ENCODE measurements at regions of chr10 and their contacts with region 1.

Region 1: DNA sequence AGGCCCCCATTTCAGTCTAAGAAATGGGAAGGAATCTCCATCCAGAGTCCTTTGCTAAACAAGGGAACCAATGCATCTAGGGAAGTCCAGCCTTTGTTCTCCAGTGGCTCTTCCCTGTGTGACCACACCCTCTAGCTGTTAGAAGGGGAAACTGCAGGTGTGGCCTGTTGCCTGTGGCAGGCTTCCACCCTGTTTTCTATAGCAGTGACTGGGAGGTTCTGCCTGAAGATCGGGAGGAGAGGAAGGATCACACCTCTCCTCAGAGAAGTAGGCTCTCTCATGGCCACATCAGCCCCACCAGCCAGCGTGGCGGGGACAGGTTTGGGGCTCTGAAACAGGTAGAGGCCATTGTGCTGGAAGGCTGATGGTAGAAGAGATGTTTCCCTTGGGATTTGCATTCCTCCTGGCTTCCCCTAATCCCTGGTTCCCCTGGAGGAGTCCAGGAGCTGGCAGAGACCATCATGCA is 47.7 kb upstream of the TRIM8 start:
- DNase-seq: peak; percentile 54 to 57 (median 55)
- H3K4me3 ChIP-seq: no peak overlapping the region
- H3K27ac ChIP-seq: peak overlapping the region; percentile 14 to 91
- H3K4me1 ChIP-seq: peaks cover 8 to 72% (median 68%) of the 10 kb centered on the region in 4 experiments
- H3K27me3 ChIP-seq: no peaks in the 10 kb centered on the region

Region 2: GRCh38 chr10:102509387-102509786 is 87.2 kb before region 1 on chr10:
- CTCF ChIA-PET with region 1: interaction called, 23 read pairs
- POLR2A ChIA-PET with region 1: no interaction called
- DNase-seq: peak; percentile 25 to 64 (median 56)
- H3K4me3 ChIP-seq: no peak overlapping the region
- H3K27ac ChIP-seq: no peak overlapping the region
- H3K4me1 ChIP-seq: peaks cover 9 to 43% (median 27%) of the 10 kb centered on the region in 4 experiments
- H3K27me3 ChIP-seq: no peaks in the 10 kb centered on the region

Region 3: GRCh38 chr10:102583435-102584417 is 12.8 kb before region 1 on chr10:
- CTCF ChIA-PET with region 1: interaction called, 43 read pairs
- POLR2A ChIA-PET with region 1: no interaction called
- DNase-seq: peak; percentile 87 to 94 (median 90)
- H3K4me3 ChIP-seq: no peak overlapping the region
- H3K27ac ChIP-seq: peak overlapping the region in 1 of 2 experiments; percentile 11
- H3K4me1 ChIP-seq: peaks cover 3 to 20% (median 14%) of the 10 kb centered on the region in 4 experiments
- H3K27me3 ChIP-seq: no peaks in the 10 kb centered on the region

Region 4: DNA sequence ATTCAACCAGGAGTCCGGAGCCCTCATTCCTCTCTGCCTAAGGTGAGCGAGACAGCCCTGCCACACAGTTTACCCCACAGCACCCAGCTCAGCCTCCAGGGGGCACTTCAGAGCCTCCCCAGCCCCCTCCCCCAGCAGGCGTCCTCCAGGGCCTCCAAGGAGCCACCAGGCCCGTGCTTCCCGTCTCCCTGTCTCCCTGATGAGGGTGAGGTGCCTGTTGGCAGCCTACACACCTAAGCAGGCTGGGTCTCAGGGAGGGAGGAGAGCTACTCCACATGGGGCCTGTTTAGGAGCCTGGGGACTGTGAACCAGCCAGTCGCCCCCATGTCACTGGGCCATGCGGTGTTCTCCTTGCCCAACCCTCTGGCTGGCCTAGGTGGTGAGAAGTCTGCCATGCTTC is 18.8 kb after region 1 on chr10:
- CTCF ChIA-PET with region 1: interaction called, 154 read pairs
- POLR2A ChIA-PET with region 1: interaction called, 10 read pairs
- DNase-seq: no peak
- H3K4me3 ChIP-seq: no peak overlapping the region
- H3K27ac ChIP-seq: no peak overlapping the region
- H3K4me1 ChIP-seq: peaks cover 2 to 73% (median 53%) of the 10 kb centered on the region in 4 experiments
- H3K27me3 ChIP-seq: no peaks in the 10 kb centered on the region

Region 5: DNA sequence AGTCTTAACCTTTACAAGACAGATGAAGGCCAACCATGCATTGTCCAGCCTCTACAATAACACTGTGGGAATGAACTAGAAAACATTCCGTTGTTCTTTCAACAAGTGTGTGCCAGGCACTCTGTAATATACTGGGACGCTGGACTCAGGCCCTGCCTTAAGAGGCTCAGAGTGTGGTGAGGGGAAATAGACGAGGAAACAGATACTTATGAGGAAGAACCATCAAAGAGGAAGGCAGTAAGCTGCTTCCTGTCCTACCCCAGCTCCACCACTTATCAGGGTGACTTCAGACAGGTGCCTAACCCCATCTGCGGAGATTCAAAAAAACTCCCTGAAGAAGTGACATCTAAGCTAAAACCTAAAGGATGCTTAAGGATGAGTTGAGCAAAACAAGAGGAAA is 38.8 kb after region 1 on chr10:
- CTCF ChIA-PET with region 1: interaction called, 11 read pairs
- POLR2A ChIA-PET with region 1: interaction called, 4 read pairs
- DNase-seq: peak in 2 of 3 donors; percentile 77 to 81
- H3K4me3 ChIP-seq: peak overlapping the region in 1 of 7 experiments; percentile 38
- H3K27ac ChIP-seq: no peak overlapping the region
- H3K4me1 ChIP-seq: peaks cover 15 to 57% (median 47%) of the 10 kb centered on the region in 4 experiments
- H3K27me3 ChIP-seq: no peaks in the 10 kb centered on the region

Region 6: GRCh38 chr10:102641880-102642735 is 45.6 kb after region 1 on chr10:
- CTCF ChIA-PET with region 1: interaction called, 12 read pairs
- POLR2A ChIA-PET with region 1: interaction called, 14 read pairs
- DNase-seq: peak; percentile 97 to 99 (median 99)
- H3K4me3 ChIP-seq: peak overlapping the region; percentile 69 to 92 (median 82)
- H3K27ac ChIP-seq: peak overlapping the region; percentile 81 to 95
- H3K4me1 ChIP-seq: peaks cover 2 to 36% (median 31%) of the 10 kb centered on the region in 4 experiments
- H3K27me3 ChIP-seq: no peaks in the 10 kb centered on the region